Pancreas (tissue), 10 donors: ENCODE measurements at regions of chr2 and their contacts with region 1.

Region 1: DNA sequence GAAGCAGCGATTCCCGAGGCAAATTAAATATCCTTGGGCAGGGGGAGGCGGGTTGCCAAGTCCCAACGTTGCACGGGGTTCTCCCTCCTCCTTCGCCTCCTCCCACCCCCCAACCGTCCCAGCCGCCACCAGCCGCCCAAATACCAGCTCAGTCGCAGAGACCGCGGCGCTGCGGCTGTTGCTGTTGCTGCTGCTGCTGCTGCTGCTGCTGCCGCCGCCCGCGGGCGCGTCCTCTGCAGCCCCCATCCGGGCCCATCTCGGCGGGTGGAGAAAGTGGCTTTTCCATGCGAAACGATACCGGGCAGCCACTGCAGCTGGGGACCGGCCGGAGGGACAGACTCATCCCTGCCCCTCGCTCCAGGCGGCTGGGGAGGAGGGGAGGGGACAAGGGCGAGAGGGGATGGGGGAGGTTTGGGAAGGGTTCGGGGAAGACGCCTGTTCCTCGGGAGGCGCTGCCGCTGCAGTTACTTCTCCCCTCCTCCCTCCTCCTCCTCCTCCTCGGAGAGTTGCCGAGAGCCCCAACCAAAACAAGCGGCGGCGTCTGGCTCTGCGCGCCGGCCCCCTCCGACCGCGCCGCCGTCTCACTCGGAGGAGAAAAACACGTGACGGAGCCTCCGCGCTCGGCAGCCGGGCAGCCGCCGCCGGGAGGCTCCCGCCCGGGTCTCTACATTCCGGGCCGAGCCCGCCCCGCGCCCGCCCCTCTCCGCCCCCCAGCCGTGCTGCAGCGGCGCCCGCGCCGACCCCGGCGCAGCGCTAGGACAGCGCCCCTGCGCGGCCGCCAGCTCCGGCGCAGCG is at the start of gene IRS1:
- DNase-seq: peak; percentile 69 to 89 (median 77)
- ATAC-seq: peak; percentile 54 to 66 (median 60)
- H3K4me3 ChIP-seq: peak within 1 kb of the TSS; percentile 72 to 88 (median 77)
- H3K27ac ChIP-seq: peak within 1 kb of the TSS; percentile 68 to 94 (median 85)
- H3K4me1 ChIP-seq: peaks cover 17 to 28% (median 19%) of the 10 kb centered on the region in 3 donors
- H3K27me3 ChIP-seq: no peaks in the 10 kb centered on the region
- CTCF ChIP-seq: no peak
- total RNA-seq, gene IRS1: 4.4 to 12.7 (median 5.9) TPM

Region 2: GRCh38 chr2:226215902-226216503 is 583.4 kb before region 1 on chr2:
- intact Hi-C with region 1: loop called in 1 of 3 experiments (anchors 5 kb)
- DNase-seq: peak in 5 of 6 donors; percentile 31 to 68 (median 52)
- ATAC-seq: peak; percentile 79 to 97 (median 90)
- H3K4me3 ChIP-seq: no peak overlapping the region
- H3K27ac ChIP-seq: no peak overlapping the region
- H3K4me1 ChIP-seq: no peaks in the 10 kb centered on the region
- H3K27me3 ChIP-seq: no peaks in the 10 kb centered on the region
- CTCF ChIP-seq: peak; percentile 28 to 60 (median 50)

Region 3: DNA sequence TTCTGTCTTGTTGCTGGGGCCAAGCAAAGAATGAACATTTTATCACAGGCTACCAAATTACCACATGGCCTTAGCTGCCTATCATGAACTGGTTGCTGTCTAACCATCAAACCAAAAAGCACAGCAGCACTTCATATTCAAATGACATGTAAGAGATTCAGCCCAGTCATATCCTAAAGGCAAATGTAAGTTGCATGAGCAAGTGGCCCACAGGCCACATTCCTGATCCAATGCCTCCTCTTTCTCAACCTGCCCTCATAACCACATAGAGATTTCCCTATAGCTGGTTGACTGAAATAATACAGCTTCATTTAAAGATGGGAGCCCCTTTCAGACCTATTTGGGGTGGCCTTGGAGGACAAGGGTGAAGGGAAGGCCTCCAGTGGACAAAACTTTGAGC is 572.0 kb before region 1 on chr2:
- intact Hi-C with region 1: loop called in 1 of 3 experiments (anchors 5 kb)
- DNase-seq: no peak
- ATAC-seq: no peak
- H3K4me3 ChIP-seq: no peak overlapping the region
- H3K27ac ChIP-seq: no peak overlapping the region
- H3K4me1 ChIP-seq: no peaks in the 10 kb centered on the region
- H3K27me3 ChIP-seq: no peaks in the 10 kb centered on the region
- CTCF ChIP-seq: no peak